Activated naive CD4-positive, alpha-beta T cell treated with anti-CD3 and anti-CD28 coated beads for 36 hours (primary cell): ENCODE measurements at regions of chr6 and their contacts with region 1.

Region 1: GRCh38 chr6:32785781-32786533 is 22.6 kb upstream of the HLA-DQB2 start:
- DNase-seq: peak; percentile 49
- H3K4me3 Mint-ChIP-seq: no peak overlapping the region
- H3K27ac Mint-ChIP-seq: no peak overlapping the region
- H3K4me1 Mint-ChIP-seq: no peaks in the 10 kb centered on the region
- H3K27me3 Mint-ChIP-seq: peaks cover 13% of the 10 kb centered on the region

Region 2: GRCh38 chr6:32700391-32701040 is 85.4 kb before region 1 on chr6:
- CTCF ChIA-PET with region 1: interaction called, 11 read pairs
- intact Hi-C with region 1: loop called (anchors 5 kb)
- DNase-seq: peak; percentile 30
- H3K4me3 Mint-ChIP-seq: no peak overlapping the region
- H3K27ac Mint-ChIP-seq: no peak overlapping the region
- H3K4me1 Mint-ChIP-seq: peaks cover 2% of the 10 kb centered on the region
- H3K27me3 Mint-ChIP-seq: peaks cover 24% of the 10 kb centered on the region

Region 3: GRCh38 chr6:32796848-32797776 is 11.2 kb after region 1 on chr6:
- CTCF ChIA-PET with region 1: interaction called, 12 read pairs
- intact Hi-C with region 1: no loop called
- DNase-seq: peak; percentile 91
- H3K4me3 Mint-ChIP-seq: peak overlapping the region; percentile 47
- H3K27ac Mint-ChIP-seq: no peak overlapping the region
- H3K4me1 Mint-ChIP-seq: peaks cover 22% of the 10 kb centered on the region
- H3K27me3 Mint-ChIP-seq: peaks cover 20% of the 10 kb centered on the region